ENCODE measurements at regions of chr17 and their contacts with region 1.

Region 1: DNA sequence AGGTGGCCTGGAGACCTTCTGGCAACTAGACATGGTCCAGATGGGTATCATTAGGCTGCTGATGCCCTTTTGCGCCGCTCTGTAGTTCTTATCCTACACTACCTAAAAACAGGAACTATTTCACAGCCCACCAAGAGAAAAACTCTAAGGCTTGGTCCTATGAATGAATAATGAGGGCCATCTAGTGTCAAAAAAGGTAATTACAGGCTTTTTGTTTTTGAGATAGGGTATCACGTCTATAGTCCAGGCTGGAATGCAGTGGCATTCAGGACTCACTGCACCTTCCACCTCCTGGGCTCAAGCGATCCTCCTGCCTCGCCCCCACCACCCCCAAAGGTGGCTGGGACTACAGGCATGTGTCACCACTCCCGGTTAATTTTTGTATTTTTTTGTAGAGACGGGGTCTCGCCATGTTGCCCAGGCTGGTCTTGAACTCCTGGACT is 20.9 kb downstream of the COIL start:
- DNase-seq: no peak
- H3K4me3 Mint-ChIP-seq: no peak overlapping the region
- H3K27ac Mint-ChIP-seq: no peak overlapping the region
- H3K4me1 Mint-ChIP-seq: peaks cover 14% of the 10 kb centered on the region
- H3K27me3 Mint-ChIP-seq: no peaks in the 10 kb centered on the region

Region 2: GRCh38 chr17:56819431-56820145 is 120.3 kb before region 1 on chr17:
- CTCF ChIA-PET with region 1: interaction called, 91 read pairs
- intact Hi-C with region 1: loop called (anchors 1 kb)
- DNase-seq: peak; percentile 88
- H3K4me3 Mint-ChIP-seq: no peak overlapping the region
- H3K27ac Mint-ChIP-seq: no peak overlapping the region
- H3K4me1 Mint-ChIP-seq: peaks cover 8% of the 10 kb centered on the region
- H3K27me3 Mint-ChIP-seq: no peaks in the 10 kb centered on the region

Region 3: GRCh38 chr17:56891784-56892183 is 48.1 kb before region 1 on chr17:
- CTCF ChIA-PET with region 1: interaction called, 7 read pairs
- intact Hi-C with region 1: loop called (anchors 2 kb)
- DNase-seq: peak; percentile 59
- H3K4me3 Mint-ChIP-seq: no peak overlapping the region
- H3K27ac Mint-ChIP-seq: no peak overlapping the region
- H3K4me1 Mint-ChIP-seq: no peaks in the 10 kb centered on the region
- H3K27me3 Mint-ChIP-seq: no peaks in the 10 kb centered on the region

Region 4: DNA sequence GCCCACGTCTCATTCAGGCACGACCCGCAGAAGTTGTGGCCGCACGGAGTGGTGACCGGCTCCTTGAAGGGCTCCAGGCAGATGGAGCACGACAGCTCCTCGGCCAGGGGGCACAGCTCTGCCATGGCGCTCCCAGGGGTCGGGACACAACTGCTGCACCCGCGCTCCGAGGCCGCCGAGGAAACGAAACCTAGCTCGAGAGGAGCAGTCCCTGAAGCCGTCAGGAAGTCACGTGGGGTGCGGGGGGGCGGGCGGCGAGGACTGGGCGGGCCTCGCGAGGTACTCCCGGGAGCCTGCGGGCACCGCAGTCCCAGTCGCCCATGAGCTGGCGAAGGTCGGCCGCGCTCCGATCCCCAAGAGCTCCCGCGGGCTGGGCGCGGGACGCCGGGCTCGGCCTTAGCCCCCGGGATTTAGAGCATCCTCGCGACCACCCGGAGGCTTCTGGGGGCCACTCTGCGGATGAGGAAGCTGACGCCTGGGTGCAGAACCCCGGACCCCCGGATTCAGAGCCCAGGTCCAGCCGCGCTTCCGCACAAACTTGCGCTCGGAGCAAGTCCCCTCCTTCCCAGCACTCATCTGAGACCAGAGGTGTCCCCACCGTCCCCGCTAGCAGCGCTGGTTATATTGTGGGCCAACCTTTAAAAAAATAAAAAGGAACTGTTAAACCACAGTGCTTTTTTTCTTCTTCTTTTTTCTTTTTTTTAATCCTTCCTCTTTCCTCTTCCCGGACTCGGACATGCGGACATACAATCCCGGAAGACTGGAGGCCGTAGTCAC is 25.9 kb before region 1 on chr17 and contains the start of gene TRIM25:
- CTCF ChIA-PET with region 1: interaction called, 13 read pairs
- intact Hi-C with region 1: loop called (anchors 1 kb)
- DNase-seq: peak; percentile 94
- H3K4me3 Mint-ChIP-seq: peak within 1 kb of the TSS; percentile 83
- H3K27ac Mint-ChIP-seq: peak within 1 kb of the TSS; percentile 98
- H3K4me1 Mint-ChIP-seq: peaks cover 50% of the 10 kb centered on the region
- H3K27me3 Mint-ChIP-seq: no peaks in the 10 kb centered on the region
- total RNA-seq, gene TRIM25: 157 to 161 TPM

Region 5: DNA sequence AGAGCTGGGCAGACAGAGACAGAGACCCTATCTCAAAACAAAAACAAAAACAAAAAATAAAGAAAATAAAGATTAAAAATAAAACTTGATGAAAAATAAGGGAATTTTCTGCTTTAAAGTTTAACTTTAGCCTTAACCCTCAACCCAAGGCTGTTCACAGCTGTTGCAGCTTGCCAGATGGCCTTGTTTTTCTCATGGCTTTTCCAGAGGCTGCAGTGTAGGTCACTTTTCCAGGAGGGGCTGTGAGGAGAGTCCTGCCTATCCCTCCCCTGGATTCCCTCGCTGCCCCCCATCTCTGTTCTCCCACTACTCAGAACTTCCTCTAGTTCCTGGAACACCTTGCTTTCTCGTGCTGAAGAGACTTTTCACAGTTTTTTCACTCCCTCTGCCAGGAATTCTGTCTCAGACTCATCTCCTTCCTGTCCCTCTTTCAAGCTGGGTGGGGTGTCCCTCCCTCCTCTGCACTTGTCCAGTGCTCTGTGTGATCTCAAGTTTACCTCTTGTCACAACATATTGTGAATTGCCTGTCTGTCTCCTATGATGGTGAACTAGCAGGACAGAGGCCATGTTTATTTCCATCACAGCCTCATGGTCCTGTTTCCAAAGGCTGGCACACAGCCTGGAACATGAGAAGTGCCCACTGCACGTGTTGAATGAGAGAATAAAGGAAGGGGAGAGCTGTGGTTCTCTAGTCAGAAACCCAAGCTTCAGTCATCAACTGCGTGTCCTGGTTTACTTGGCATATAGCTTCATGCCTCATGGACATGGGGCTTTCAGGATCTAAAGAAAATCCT is 246.5 kb after region 1 on chr17:
- CTCF ChIA-PET with region 1: no interaction called
- intact Hi-C with region 1: no loop called
- DNase-seq: no peak
- H3K4me3 Mint-ChIP-seq: no peak overlapping the region
- H3K27ac Mint-ChIP-seq: no peak overlapping the region
- H3K4me1 Mint-ChIP-seq: no peaks in the 10 kb centered on the region
- H3K27me3 Mint-ChIP-seq: peaks cover 1% of the 10 kb centered on the region